Astrocyte of the cerebellum (primary cell): ENCODE measurements at regions of chr7 and their contacts with region 1.

Region 1: DNA sequence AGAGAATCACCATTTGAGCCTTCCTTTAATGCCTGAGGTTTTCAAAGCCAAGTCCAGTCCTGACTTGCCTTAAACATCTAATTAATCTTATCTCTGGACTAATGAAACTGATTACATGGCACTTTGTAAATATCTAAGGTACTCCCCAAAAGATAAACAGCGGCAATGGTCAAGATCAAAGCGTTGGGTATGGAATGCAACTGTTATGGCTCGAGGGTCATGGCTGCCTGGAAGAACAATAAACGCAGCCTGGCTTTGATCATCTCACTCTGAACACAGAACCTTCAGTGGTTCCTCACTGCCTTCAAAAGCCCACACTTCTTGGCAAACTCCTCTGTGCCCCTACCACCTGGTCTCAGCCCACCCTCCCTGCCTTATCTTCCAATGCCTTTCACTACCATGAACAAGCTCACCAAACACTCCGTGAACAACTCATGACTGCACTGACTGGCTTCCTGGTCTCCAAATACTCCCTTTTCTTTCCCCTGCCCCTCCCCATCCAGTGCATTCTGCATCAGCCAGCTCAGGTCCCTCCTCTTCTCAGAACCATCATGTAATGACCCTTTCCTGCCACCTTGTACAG is 150.2 kb upstream of the NFE2L3 start:
- DNase-seq: no peak
- H3K4me3 ChIP-seq: no peak overlapping the region
- CTCF ChIP-seq: no peak

Region 2: GRCh38 chr7:25707768-25708620 is 293.8 kb before region 1 on chr7:
- in situ Hi-C with region 1: no loop called
- DNase-seq: no peak
- H3K4me3 ChIP-seq: no peak overlapping the region
- CTCF ChIP-seq: no peak

Region 3: DNA sequence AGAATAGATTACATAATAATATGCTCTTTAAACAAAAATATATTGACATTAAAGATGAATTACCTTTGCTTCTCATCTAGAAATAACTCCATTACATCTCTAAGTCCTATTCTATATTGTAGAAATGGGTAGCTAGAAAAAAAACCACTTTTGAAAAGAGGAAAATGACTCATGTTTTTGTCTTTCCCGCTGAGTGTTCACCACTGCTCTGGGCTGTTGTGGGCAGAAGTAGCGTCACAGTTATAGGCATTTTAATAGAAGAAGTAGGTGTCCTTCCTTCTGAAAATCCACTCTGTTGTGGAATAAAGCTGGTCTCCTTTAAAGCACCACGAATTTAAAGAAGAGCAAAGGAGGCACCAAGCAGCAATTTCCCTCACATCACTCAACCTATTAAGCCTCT is 32.6 kb after region 1 on chr7:
- in situ Hi-C with region 1: no loop called
- DNase-seq: no peak
- H3K4me3 ChIP-seq: no peak overlapping the region
- CTCF ChIP-seq: no peak

Region 4: DNA sequence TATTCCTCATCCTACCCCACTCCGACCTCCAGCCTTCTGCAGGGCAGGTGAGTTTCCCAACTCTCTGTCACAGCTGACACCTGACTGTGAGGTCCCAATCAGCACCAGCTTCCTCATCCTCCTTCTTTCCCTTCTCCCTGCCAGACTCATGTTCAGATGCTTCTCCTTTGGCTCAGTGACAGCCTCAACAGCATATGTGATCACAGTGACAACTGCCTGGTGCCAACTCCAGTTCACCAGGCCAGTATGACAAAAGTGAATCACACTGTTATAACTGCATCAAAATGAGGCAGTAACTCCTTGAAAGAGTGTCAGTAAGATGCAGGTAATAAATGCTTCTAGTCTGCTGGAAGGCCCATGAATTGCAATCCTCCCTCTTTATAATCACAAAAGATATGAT is 103.5 kb after region 1 on chr7:
- in situ Hi-C with region 1: loop called (anchors 5 kb)
- DNase-seq: no peak
- H3K4me3 ChIP-seq: no peak overlapping the region
- CTCF ChIP-seq: no peak